Sciatic nerve (tissue), 2 donors: ENCODE measurements at regions of chr11 and their contacts with region 1.

Region 1: GRCh38 chr11:110032259-110032658 is 60.9 kb upstream of the ZC3H12C start:
- DNase-seq: no peak
- ATAC-seq: no peak

Region 2: DNA sequence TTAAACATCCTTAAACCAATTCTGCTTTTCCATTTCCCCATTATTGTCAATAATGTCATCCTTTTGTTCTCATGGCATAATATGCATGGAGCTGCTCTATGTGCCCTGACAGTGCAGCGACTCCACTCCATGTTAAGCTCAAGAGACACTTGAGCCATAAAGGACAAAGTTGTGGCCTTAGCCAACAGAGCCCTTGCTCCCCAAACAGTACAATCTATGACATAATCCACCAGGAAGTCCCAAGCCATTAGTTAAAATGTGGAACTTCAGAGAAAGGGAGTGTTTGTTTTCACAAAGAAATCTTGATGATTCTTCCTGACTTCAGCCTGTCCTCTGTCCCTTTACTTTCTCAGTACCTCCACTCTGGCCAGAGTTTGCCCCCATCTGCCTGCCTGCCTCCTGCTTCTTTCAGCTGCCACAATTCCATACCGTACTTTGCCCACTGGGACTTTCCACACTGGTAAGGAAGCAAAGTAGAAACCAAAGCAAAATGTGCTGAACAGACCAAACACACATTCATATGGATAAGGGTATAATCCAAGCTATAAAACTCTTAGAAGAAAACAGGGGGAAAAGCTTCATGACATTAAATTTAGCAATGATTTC is 14.6 kb after region 1 on chr11:
- intact Hi-C with region 1: loop called (anchors 2 kb)
- DNase-seq: no peak
- ATAC-seq: no peak

Region 3: GRCh38 chr11:110858547-110858921 is 826.3 kb after region 1 on chr11:
- intact Hi-C with region 1: no loop called
- DNase-seq: peak; percentile 82
- ATAC-seq: peak; percentile 96